ENCODE measurements at regions of chr6 and their contacts with region 1.

Region 1: DNA sequence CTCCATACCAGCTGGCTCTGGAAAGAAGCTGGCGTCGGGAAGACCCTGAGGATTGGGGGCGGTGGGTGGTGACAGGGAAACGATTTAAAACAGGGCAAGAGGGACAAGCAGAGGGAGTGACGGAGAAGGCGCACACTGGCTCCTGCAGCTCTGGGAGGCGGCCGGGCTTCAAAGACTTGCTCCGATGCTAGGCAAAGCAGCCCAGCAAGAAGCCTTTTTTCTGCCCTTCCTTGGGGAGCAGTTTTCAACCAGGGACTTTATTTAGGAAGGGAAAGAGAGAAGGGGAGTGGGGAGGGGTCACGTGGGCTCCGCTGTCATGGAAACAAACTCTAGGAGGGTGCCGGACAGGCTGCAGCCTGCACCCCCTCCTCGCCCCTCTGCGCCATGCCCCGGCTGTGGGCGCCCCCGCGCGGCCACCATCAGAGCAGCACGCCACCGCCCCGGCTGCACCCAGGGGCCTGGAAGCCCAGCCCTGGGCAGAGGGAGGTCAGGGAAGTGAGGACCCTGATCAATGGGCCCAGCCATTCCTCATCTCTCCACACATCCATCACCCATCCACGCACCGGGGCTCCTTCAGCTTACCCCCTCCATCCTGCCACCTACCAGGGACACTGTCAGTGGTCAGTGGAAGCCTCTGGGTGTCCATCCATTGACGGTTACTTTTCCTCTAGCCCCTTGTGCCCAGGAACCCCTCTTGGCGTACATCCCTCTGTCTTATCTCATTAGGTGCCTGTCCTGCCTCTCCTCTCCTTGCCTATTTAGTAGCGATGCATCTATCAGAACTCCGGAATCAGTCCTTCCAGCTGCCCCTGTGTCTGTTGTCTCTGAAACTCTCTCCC is 66.6 kb upstream of the CCDC167 start:
- DNase-seq: peak; percentile 71
- H3K4me3 Mint-ChIP-seq: no peak overlapping the region
- H3K27ac Mint-ChIP-seq: no peak overlapping the region
- H3K4me1 Mint-ChIP-seq: peaks cover 5% of the 10 kb centered on the region
- H3K27me3 Mint-ChIP-seq: peaks cover 17% of the 10 kb centered on the region

Region 2: GRCh38 chr6:37483917-37484785 is 82.2 kb before region 1 on chr6:
- CTCF ChIA-PET with region 1: interaction called, 13 read pairs
- POLR2A ChIA-PET with region 1: interaction called, 3 read pairs
- DNase-seq: peak; percentile 77
- H3K4me3 Mint-ChIP-seq: no peak overlapping the region
- H3K27ac Mint-ChIP-seq: no peak overlapping the region
- H3K4me1 Mint-ChIP-seq: peaks cover 22% of the 10 kb centered on the region
- H3K27me3 Mint-ChIP-seq: no peaks in the 10 kb centered on the region

Region 3: DNA sequence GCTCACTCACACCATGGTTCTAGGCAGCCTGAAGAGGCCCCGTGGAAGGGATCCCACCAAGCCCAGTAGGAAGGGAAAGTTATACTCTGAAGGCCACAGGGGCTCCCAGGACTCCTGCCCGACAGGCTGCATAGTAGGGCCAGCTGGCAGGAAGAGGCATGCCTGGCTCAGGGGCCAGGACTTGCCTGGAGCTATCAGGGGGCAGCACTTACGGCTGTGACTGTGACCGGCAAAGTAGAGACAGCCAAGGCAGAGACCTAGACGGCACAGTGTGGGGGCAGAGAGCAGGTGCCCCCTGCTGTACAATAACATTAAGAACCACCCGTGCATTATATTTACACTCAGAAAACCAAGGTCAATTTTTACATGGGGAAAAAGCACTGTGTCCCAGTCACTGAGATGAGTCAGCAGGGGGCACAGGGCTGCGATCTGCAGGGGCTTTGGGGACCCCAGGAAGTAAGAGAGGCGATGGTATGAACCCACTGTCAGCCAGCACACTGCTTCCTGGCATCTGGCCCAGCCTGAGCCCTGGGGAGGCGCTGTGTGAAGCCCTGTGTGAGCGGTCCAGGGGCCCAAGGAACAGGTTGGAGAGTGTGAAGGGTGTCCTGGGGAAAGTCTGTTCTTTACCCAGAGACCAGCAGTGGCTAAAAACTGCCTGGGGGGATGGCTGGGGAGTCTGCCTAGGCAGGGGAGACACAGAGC is 76.5 kb before region 1 on chr6:
- CTCF ChIA-PET with region 1: interaction called, 16 read pairs
- POLR2A ChIA-PET with region 1: interaction called, 4 read pairs
- DNase-seq: no peak
- H3K4me3 Mint-ChIP-seq: no peak overlapping the region
- H3K27ac Mint-ChIP-seq: peak overlapping the region; percentile 60
- H3K4me1 Mint-ChIP-seq: peaks cover 64% of the 10 kb centered on the region
- H3K27me3 Mint-ChIP-seq: no peaks in the 10 kb centered on the region

Region 4: GRCh38 chr6:37794825-37795224 is 228.5 kb after region 1 on chr6:
- CTCF ChIA-PET with region 1: no interaction called
- POLR2A ChIA-PET with region 1: no interaction called
- DNase-seq: no peak
- H3K4me3 Mint-ChIP-seq: no peak overlapping the region
- H3K27ac Mint-ChIP-seq: no peak overlapping the region
- H3K4me1 Mint-ChIP-seq: peaks cover 10% of the 10 kb centered on the region
- H3K27me3 Mint-ChIP-seq: peaks cover 1% of the 10 kb centered on the region